Activated CD4-positive, alpha-beta T cell treated with anti-CD3 and anti-CD28 coated beads for 36 hours (primary cell): ENCODE measurements at regions of chr17 and their contacts with region 1.

Region 1: GRCh38 chr17:66337866-66338485 is 35.6 kb downstream of the PRKCA start:
- DNase-seq: no peak
- ATAC-seq: no peak
- H3K4me3 Mint-ChIP-seq: no peak overlapping the region
- H3K27ac Mint-ChIP-seq: peak overlapping the region; percentile 69
- H3K4me1 Mint-ChIP-seq: peaks cover 80% of the 10 kb centered on the region
- H3K27me3 Mint-ChIP-seq: no peaks in the 10 kb centered on the region

Region 2: GRCh38 chr17:66228887-66229782 is 108.8 kb before region 1 on chr17 and contains the start of gene APOH:
- CTCF ChIA-PET with region 1: no interaction called
- POLR2A ChIA-PET with region 1: no interaction called
- intact Hi-C with region 1: no loop called
- DNase-seq: no peak
- ATAC-seq: no peak
- H3K4me3 Mint-ChIP-seq: no peak within 1 kb of the TSS
- H3K27ac Mint-ChIP-seq: no peak within 1 kb of the TSS
- H3K4me1 Mint-ChIP-seq: peaks cover 5% of the 10 kb centered on the region
- H3K27me3 Mint-ChIP-seq: no peaks in the 10 kb centered on the region
- total RNA-seq, gene APOH: not detected

Region 3: DNA sequence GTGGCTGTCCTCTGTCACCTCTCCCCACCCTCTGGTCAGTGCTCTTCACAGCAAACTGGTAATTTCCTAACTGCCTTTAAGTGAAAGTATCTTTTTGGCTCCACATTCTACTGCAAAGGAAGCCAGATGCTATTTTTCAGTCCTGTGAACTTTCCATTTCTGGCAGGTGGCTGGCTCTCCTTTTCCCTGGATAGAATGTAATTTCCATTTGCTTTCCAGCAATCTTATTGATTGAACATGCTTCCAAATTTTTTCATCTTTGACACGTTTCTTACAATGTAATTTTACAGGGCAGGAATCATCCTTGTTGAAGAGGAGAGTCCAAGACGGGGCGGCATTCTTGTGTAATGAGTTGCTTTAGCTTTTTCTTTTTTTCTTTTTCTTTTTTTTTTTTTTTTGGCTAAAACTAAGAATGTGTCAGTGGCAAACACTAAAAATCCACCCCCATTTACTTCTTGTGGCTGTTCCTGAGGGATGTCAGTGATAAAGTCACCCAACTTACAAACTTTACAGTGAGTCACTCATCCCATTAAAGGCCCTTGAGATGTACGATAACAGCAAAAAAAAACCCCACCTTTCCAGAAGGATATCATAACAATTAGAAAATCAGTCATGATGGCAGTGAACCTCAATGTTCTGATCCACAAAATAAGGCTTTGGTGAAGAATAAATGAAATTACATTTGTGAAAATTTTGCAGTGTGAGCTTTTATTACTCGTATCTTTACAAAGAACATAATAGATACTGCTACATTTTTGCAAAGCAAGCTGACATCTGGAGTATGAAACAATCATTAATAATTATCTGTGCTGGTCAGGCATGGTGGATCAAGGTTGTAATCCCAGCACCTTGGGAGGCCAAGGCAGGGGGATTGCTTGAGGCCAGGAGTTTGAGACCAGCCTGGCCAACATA is 64.9 kb before region 1 on chr17:
- CTCF ChIA-PET with region 1: no interaction called
- POLR2A ChIA-PET with region 1: no interaction called
- intact Hi-C with region 1: no loop called
- DNase-seq: no peak
- ATAC-seq: no peak
- H3K4me3 Mint-ChIP-seq: no peak overlapping the region
- H3K27ac Mint-ChIP-seq: no peak overlapping the region
- H3K4me1 Mint-ChIP-seq: peaks cover 7% of the 10 kb centered on the region
- H3K27me3 Mint-ChIP-seq: no peaks in the 10 kb centered on the region

Region 4: DNA sequence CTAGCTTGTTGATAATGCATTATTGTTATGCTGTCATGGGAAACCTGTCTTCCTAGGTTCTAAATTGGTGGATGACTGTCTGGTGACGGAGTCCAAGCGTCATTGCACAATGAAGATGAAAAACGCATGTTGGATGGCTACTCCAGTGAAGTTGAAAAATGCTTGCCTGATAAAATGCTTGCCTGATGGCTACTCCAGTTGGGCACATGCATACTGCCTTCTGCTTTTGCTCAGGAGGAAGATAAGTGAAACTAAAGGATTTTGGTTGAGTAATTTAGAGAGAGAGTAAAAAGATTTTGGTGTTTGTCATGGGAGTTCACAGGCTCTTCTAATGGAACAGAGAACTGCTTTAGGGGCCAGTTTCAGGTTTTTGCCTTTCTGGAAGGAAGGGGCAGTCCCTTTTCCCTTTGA is 83.0 kb after region 1 on chr17:
- CTCF ChIA-PET with region 1: no interaction called
- POLR2A ChIA-PET with region 1: interaction called, 12 read pairs
- intact Hi-C with region 1: no loop called
- DNase-seq: no peak
- ATAC-seq: peak; percentile 60
- H3K4me3 Mint-ChIP-seq: no peak overlapping the region
- H3K27ac Mint-ChIP-seq: no peak overlapping the region
- H3K4me1 Mint-ChIP-seq: peaks cover 75% of the 10 kb centered on the region
- H3K27me3 Mint-ChIP-seq: no peaks in the 10 kb centered on the region